HCT116 (cell line): ENCODE measurements at regions of chr6 and their contacts with region 1.

Region 1: GRCh38 chr6:29752451-29753308 is 29.4 kb downstream of the HLA-F start:
- DNase-seq: peak; percentile 90
- ATAC-seq: peak; percentile 79
- H3K4me3 ChIP-seq: peak overlapping the region; percentile 63 to 83
- H3K27ac ChIP-seq: peak overlapping the region; percentile 74
- H3K4me1 ChIP-seq: peaks cover 2 to 27% of the 10 kb centered on the region in 2 experiments; a peak in 3 of 4 replicates
- H3K27me3 ChIP-seq: no peaks in the 10 kb centered on the region
- CTCF ChIP-seq: peak; percentile 98 to 99 (median 99)
- POLR2A ChIP-seq: peak; percentile 16
- RAD21 ChIP-seq: peak; percentile 81

Region 2: GRCh38 chr6:29763491-29764289 is 11.0 kb after region 1 on chr6:
- CTCF ChIA-PET with region 1: interaction called, 10 read pairs
- POLR2A ChIA-PET with region 1: interaction called, 12 read pairs
- RAD21 ChIA-PET with region 1: no interaction called
- intact Hi-C with region 1: no loop called
- DNase-seq: no peak
- ATAC-seq: no peak
- H3K4me3 ChIP-seq: no peak overlapping the region
- H3K27ac ChIP-seq: no peak overlapping the region
- H3K4me1 ChIP-seq: peaks cover 4 to 35% of the 10 kb centered on the region in 2 experiments; a peak in 3 of 4 replicates
- H3K27me3 ChIP-seq: no peaks in the 10 kb centered on the region
- CTCF ChIP-seq: no peak
- POLR2A ChIP-seq: no peak
- RAD21 ChIP-seq: no peak

Region 3: DNA sequence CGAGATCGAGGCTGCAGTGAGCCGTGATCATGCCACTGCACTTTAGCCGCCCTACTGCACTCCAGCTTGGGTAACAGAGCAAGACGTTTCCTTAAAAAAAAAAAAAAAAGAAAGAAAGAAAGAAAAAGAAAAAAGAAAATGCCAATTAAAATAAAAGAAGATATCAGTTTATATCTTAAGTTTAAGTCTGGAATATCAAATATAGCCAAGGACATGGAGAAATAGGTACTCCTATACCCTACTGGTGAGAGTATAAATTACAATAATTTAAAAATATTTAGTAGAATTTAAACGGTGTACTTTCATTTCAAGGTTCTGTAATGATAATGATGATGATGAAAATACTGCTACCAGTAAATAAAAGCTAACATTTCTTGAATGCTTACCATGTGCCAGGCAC is 364.0 kb after region 1 on chr6:
- CTCF ChIA-PET with region 1: no interaction called
- POLR2A ChIA-PET with region 1: no interaction called
- RAD21 ChIA-PET with region 1: no interaction called
- intact Hi-C with region 1: no loop called
- DNase-seq: no peak
- ATAC-seq: no peak
- H3K4me3 ChIP-seq: no peak overlapping the region
- H3K27ac ChIP-seq: no peak overlapping the region
- H3K4me1 ChIP-seq: peaks cover 3 to 13% of the 10 kb centered on the region in 2 experiments; a peak in 3 of 4 replicates
- H3K27me3 ChIP-seq: no peaks in the 10 kb centered on the region
- CTCF ChIP-seq: 0 out of 6 replicates have a peak, but pooled peaks of 2 of the 3 experiments have one; percentile 8 to 22
- POLR2A ChIP-seq: no peak
- RAD21 ChIP-seq: no peak